PC-3 (cell line): ENCODE measurements at regions of chr2 and their contacts with region 1.

Region 1: DNA sequence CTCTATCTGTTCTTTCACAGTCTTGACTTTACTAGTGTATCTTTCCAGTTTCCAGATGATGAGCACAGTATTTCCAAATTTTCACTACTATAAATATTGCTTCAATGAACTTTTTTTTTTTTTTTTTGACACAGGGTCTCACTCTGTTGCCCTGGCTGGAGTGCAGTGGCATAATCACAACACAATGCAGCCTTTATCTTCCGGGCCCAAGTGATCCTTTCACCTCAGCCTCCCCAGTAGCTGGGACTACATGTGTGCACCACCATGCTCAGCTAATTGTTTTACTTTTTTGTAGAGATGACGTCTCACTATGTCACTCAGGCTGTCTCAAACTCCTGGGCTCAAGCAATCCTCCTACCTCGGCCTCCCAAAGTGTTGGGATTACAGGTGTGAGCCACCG is 142.8 kb downstream of the SRBD1 start:
- DNase-seq: no peak
- ATAC-seq: no peak
- H3K4me3 ChIP-seq: no peak overlapping the region
- H3K27ac ChIP-seq: no peak overlapping the region
- H3K4me1 ChIP-seq: peaks cover 18% of the 10 kb centered on the region
- H3K27me3 ChIP-seq: no peaks in the 10 kb centered on the region
- CTCF ChIP-seq: no peak

Region 2: GRCh38 chr2:45439788-45440773 is 28.2 kb before region 1 on chr2:
- CTCF ChIA-PET with region 1: no interaction called
- POLR2A ChIA-PET with region 1: no interaction called
- intact Hi-C with region 1: loop called (anchors 1 kb)
- DNase-seq: peak; percentile 59
- ATAC-seq: peak; percentile 76
- H3K4me3 ChIP-seq: no peak overlapping the region
- H3K27ac ChIP-seq: peak overlapping the region; percentile 71
- H3K4me1 ChIP-seq: peaks cover 21% of the 10 kb centered on the region
- H3K27me3 ChIP-seq: no peaks in the 10 kb centered on the region
- CTCF ChIP-seq: peak; percentile 80